ENCODE measurements at regions of chr7 and their contacts with region 1.

Region 1: GRCh38 chr7:38178004-38178694 is at the start of gene STARD3NL:
- DNase-seq: peak; percentile 97
- H3K4me3 Mint-ChIP-seq: peak within 1 kb of the TSS; percentile 97
- H3K27ac Mint-ChIP-seq: peak within 1 kb of the TSS; percentile 92
- H3K4me1 Mint-ChIP-seq: peaks cover 34% of the 10 kb centered on the region
- H3K27me3 Mint-ChIP-seq: peaks cover 11% of the 10 kb centered on the region
- total RNA-seq, gene STARD3NL: 27.1 and 27.5 TPM in 2 replicates

Region 2: GRCh38 chr7:38086857-38087256 is 91.3 kb before region 1 on chr7:
- intact Hi-C with region 1: no loop called
- DNase-seq: no peak
- H3K4me3 Mint-ChIP-seq: no peak overlapping the region
- H3K27ac Mint-ChIP-seq: no peak overlapping the region
- H3K4me1 Mint-ChIP-seq: no peaks in the 10 kb centered on the region
- H3K27me3 Mint-ChIP-seq: peaks cover 12% of the 10 kb centered on the region

Region 3: GRCh38 chr7:38107486-38107893 is 70.7 kb before region 1 on chr7:
- intact Hi-C with region 1: loop called (anchors 1 kb)
- DNase-seq: peak; percentile 90
- H3K4me3 Mint-ChIP-seq: no peak overlapping the region
- H3K27ac Mint-ChIP-seq: no peak overlapping the region
- H3K4me1 Mint-ChIP-seq: no peaks in the 10 kb centered on the region
- H3K27me3 Mint-ChIP-seq: peaks cover 40% of the 10 kb centered on the region

Region 4: DNA sequence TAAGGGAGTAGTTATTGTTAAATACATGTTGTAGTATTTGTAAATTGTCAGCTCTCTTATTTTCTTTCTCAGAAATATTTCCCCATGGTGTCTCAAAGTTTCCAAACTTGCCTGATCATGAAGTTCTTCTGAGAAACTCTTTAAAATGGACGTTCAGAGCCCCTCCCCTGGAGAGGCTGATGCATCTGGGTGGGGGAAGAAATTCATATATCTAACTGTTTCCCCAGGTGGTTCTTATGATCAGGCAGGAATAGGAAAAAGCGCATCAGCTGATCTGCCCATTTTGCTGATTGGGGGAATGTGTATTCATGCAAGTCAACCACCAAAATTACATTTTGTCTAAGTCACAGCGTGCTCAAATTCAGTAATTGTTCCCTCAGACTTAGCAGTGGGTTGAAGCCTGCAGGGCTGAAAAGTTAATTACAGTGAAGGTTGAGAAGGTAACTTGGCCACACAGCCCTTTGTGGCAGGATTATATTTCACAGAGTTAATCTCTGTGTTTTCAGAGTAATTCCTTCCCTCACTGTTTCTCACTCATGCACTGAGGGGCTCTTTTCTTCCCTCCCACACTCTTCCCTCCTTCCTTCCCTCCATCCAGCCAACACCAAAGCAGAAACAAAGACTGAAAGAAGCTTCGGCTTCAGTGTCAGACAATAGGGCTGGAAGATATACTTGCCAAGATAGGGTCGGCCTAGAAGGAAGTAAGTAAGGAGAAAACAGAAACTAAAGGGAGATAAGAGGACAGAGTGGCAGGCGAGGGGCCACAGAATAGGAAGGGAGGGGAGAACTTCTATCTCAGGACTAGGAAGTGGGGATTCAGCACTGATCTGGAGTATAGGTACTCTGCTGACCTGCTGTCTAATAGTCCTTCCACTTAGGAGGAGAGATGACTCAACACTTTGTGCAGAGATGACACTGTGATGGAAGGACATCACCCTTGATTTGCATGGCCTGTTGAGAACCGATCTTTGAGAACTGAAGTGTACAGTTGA is 50.6 kb before region 1 on chr7:
- intact Hi-C with region 1: loop called (anchors 5 kb)
- DNase-seq: no peak
- H3K4me3 Mint-ChIP-seq: no peak overlapping the region
- H3K27ac Mint-ChIP-seq: no peak overlapping the region
- H3K4me1 Mint-ChIP-seq: no peaks in the 10 kb centered on the region
- H3K27me3 Mint-ChIP-seq: peaks cover 4% of the 10 kb centered on the region

Region 5: DNA sequence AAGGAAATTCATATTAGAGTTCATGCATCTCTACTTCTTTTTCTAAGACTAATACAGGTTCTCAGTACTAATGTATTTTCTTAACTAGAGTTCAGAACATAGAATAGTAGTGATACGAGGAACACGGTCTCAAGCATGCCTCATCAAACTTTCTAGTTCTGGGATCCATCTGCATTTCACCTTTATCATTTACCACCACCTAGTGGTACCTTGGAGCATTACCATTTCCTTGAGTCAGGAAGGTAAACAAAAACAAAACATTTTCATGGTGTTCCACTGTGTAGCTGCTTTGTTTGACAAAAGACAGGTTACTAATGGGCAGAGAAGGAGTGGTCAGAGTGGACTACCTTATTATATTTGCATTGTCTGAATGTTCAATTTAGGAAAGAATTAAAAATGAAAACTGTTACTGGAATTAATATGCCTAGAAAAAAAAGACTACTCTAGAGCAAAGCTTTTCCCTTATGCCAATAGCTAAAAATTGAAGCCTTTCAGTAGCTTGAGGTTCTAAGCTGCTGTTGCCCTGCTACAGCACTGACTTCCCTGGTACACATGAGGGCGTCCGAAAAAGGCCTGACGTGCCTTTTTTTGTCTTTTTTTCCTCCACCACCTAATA is 44.4 kb after region 1 on chr7:
- intact Hi-C with region 1: loop called (anchors 2 kb)
- DNase-seq: peak; percentile 86
- H3K4me3 Mint-ChIP-seq: no peak overlapping the region
- H3K27ac Mint-ChIP-seq: no peak overlapping the region
- H3K4me1 Mint-ChIP-seq: peaks cover 27% of the 10 kb centered on the region
- H3K27me3 Mint-ChIP-seq: no peaks in the 10 kb centered on the region

Region 6: DNA sequence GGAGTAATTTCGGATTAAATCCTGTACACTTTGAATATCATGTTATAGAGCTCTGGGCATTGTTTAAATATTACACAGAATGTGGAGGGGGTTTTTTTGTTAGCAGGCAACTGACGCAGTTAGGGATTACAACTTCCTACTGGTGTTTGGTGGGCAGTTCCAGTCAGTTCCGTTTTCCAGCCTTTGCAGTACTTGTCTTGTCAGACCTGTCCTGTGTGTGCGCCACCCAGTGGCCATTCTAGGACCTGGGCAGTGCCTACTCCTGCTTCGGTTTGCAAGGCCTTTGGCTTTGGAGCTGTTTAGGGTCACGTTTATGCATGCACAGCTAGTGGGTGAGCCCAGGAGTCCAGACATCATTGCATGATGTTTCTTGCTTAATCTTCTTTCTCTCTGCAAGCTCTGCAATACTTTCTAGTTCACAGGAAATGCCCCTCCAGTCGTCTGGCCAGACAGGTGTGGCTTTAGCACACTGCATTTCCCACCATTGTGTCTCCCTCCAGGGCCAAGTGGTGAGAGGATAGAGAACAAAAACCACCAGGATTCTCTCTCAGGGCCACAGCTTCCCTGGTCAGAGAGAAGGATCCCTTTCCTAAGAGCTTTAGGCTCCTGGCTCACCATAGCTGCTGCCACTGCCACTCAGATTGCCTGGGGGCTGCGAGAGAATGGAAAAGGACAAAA is 191.8 kb after region 1 on chr7:
- intact Hi-C with region 1: loop called (anchors 2 kb)
- DNase-seq: peak; percentile 93
- H3K4me3 Mint-ChIP-seq: peak overlapping the region; percentile 22
- H3K27ac Mint-ChIP-seq: peak overlapping the region; percentile 40
- H3K4me1 Mint-ChIP-seq: peaks cover 32% of the 10 kb centered on the region
- H3K27me3 Mint-ChIP-seq: no peaks in the 10 kb centered on the region

Region 7: DNA sequence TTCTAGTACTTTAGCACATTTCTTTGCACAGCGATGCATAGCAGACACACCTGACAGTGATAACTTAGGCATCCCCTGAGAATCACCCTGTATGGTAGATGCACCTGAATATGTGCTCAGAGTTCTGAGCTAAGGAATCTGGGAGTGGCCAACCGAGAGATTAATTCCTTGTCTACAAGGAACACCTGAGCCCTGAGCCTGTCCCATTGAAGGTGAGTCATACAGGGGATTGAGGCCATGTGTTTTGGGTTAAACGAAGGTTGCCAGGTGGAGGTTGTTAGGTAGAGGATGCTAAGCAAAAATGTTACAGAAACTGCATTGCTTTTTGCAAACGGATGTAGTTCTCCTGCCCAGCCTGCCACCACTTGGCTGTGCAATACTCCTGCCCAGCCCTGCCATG is 324.1 kb after region 1 on chr7:
- intact Hi-C with region 1: no loop called
- DNase-seq: no peak
- H3K4me3 Mint-ChIP-seq: no peak overlapping the region
- H3K27ac Mint-ChIP-seq: no peak overlapping the region
- H3K4me1 Mint-ChIP-seq: no peaks in the 10 kb centered on the region
- H3K27me3 Mint-ChIP-seq: peaks cover 14% of the 10 kb centered on the region

Region 8: DNA sequence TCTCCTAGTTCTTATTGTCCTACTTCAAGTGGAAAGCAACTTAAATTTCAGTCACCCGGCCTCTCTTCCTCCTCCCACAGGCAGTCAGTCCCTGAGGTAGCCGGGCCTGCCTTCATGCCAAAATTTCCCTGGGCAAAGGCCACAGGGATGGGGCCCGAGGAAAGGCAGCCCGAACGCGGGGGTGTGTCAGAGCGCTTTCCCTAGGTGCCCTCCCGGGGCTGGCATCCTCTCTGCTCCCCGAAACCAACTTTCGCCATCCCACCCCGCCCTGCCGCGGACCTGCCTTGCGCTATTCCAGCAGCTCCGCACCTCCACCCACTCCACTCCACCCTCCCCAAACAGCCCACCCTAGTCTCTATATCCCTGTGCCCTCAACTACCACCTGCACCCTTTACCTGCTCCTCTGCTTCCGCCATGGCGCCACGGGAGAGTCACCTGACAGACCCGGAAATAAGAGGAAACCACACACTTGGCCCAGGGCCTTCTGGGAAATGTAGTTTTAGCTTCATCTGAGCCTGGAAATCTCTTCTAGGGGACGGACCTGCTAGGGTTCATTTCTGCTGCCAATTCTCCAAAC is 730.7 kb after region 1 on chr7 and contains the start of gene VPS41:
- intact Hi-C with region 1: loop called (anchors 5 kb)
- DNase-seq: peak; percentile 94
- H3K4me3 Mint-ChIP-seq: peak within 1 kb of the TSS; percentile 100
- H3K27ac Mint-ChIP-seq: peak within 1 kb of the TSS; percentile 98
- H3K4me1 Mint-ChIP-seq: peaks cover 24% of the 10 kb centered on the region
- H3K27me3 Mint-ChIP-seq: peaks cover 3% of the 10 kb centered on the region
- total RNA-seq, gene VPS41: 57.9 and 58.4 TPM in 2 replicates